ENCODE measurements at regions of chr3 and their contacts with region 1.

Region 1: GRCh38 chr3:149480325-149481017 is 6.0 kb downstream of the TM4SF4 start:
- H3K4me3 Mint-ChIP-seq: no peak overlapping the region
- H3K27ac Mint-ChIP-seq: no peak overlapping the region
- H3K4me1 Mint-ChIP-seq: peaks cover 20% of the 10 kb centered on the region
- H3K27me3 Mint-ChIP-seq: no peaks in the 10 kb centered on the region

Region 2: GRCh38 chr3:149120051-149120972 is 360.2 kb before region 1 on chr3:
- intact Hi-C with region 1: loop called (anchors 5 kb)
- H3K4me3 Mint-ChIP-seq: no peak overlapping the region
- H3K27ac Mint-ChIP-seq: no peak overlapping the region
- H3K4me1 Mint-ChIP-seq: no peaks in the 10 kb centered on the region
- H3K27me3 Mint-ChIP-seq: no peaks in the 10 kb centered on the region

Region 3: GRCh38 chr3:149273096-149273751 is 207.2 kb before region 1 on chr3:
- intact Hi-C with region 1: loop called (anchors 10 kb)
- H3K4me3 Mint-ChIP-seq: no peak overlapping the region
- H3K27ac Mint-ChIP-seq: no peak overlapping the region
- H3K4me1 Mint-ChIP-seq: peaks cover 7% of the 10 kb centered on the region
- H3K27me3 Mint-ChIP-seq: no peaks in the 10 kb centered on the region

Region 4: DNA sequence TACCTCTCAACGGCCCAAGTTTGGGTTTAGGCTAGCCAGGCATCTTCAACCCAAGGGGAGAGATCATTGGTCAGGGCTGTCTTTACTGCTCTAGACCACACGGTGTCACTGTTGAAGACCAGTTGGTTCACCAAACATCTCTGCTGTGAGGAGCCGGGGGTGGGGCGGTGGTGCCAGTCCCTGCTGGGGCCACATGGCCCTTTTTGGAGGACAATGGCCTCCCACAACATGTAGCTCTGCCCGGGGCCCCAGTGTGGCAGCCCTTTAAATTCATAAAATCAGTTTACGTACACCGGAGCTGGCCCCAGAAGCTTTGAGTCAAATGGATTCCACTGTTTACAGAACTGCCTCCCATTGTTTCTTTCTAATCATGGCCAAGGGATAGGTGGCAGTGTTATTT is 127.9 kb before region 1 on chr3:
- intact Hi-C with region 1: loop called (anchors 2 kb)
- H3K4me3 Mint-ChIP-seq: no peak overlapping the region
- H3K27ac Mint-ChIP-seq: no peak overlapping the region
- H3K4me1 Mint-ChIP-seq: no peaks in the 10 kb centered on the region
- H3K27me3 Mint-ChIP-seq: no peaks in the 10 kb centered on the region

Region 5: GRCh38 chr3:149393345-149394160 is 86.9 kb before region 1 on chr3:
- intact Hi-C with region 1: loop called (anchors 1 kb)
- H3K4me3 Mint-ChIP-seq: no peak overlapping the region
- H3K27ac Mint-ChIP-seq: no peak overlapping the region
- H3K4me1 Mint-ChIP-seq: no peaks in the 10 kb centered on the region
- H3K27me3 Mint-ChIP-seq: no peaks in the 10 kb centered on the region